Activated T-helper 2 cell treated with anti-CD3 and anti-CD28 coated beads, Interferon-gamma antibody, Interleukin-2, Interleukin-4, amounts not matched to agents 10 μg/mL and 5 μg/mL and 100 μg/mL, durations not matched to agents 14 hours and 24 hours and 36 hours (primary cell): ENCODE measurements at regions of chr2 and their contacts with region 1.

Region 1: DNA sequence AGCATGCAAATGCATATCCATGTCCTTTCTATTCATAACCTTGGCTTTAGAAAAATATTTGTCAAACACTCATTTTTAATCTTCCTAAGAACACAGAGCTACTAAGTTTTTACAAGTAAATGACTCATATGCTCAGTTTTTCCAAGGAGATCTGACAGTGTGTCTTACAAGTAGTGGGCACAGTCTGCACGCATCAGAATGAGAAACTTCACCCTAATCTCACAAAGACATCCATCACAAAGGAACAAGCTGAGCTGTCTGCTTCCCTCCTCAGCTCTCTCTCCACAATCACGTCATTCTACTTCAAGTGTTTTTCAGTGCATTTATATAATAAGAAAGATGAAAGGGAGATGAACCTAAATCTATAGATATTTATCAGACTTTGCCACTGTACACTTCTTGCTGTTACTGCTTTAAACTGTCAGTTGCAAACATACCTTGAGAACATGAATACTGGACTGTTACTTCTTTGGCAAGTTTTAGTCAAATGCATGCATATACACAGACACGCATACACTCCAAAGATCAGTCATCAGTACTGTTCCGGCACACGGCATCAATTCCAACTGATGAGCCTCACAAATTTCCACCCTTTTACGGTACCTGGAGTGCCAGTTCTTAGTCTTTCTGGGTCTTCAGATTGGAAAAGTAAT is 75.7 kb downstream of the RBMS1 start:
- DNase-seq: no peak
- H3K4me3 Mint-ChIP-seq: no peak overlapping the region
- H3K27ac Mint-ChIP-seq: peak overlapping the region; percentile 85
- H3K4me1 Mint-ChIP-seq: peaks cover 61% of the 10 kb centered on the region
- H3K27me3 Mint-ChIP-seq: no peaks in the 10 kb centered on the region

Region 2: DNA sequence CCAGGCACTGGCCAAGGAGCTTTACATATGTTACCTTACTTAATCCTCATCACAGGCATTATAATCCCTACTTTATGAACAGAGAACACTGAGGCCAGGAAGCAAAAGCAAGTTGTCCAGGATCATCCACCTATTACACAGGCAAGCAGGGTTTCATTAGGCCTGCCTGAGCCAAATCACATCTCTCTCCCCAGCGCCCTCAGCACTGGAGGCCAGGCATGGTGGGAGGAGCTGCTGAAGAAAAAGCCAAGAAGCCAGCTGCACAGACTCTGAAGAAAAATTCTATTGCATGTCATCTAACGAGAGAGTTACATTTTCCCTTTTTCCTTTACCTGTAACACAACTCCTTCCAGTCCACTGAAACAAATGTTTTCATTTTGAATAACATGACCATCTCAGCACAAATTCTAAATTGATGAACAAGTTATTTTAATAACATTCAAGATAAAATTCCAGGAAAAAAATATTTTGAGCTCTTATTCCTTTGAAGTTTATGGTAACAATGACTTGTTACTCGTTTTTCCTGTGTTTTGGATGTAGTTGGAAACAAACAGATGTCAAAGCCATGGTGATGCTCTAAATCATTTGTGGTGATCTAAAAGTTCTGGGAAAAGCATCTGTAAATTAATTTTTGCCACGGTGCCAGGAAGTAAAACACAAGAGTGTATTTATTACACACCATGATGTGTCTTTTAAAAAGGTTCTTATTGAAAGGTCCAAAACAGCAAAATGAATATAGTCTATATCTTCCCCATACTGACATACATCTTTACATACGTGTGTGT is 78.8 kb before region 1 on chr2:
- intact Hi-C with region 1: loop called (anchors 5 kb)
- DNase-seq: no peak
- H3K4me3 Mint-ChIP-seq: no peak overlapping the region
- H3K27ac Mint-ChIP-seq: no peak overlapping the region
- H3K4me1 Mint-ChIP-seq: peaks cover 34% of the 10 kb centered on the region
- H3K27me3 Mint-ChIP-seq: no peaks in the 10 kb centered on the region

Region 3: DNA sequence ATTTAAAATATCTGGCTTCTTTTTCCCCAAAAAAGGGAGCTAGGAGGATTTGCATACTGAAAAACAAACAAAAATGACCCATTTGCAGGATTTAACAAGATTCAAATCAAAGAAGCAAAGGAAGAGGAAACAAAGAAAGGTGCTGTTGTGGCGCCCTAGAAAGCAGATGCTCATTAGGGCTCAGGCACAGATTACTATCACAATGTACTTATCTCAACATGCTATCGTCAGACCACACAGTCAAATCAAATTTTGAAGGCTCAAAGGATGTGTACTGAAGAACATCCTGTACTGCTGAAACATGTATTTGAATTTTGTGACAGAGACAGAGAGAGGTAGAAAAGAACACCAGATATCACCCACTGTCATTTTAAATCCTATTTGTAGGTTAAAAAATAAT is 64.8 kb after region 1 on chr2:
- intact Hi-C with region 1: loop called (anchors 1 kb)
- DNase-seq: peak; percentile 41
- H3K4me3 Mint-ChIP-seq: no peak overlapping the region
- H3K27ac Mint-ChIP-seq: peak overlapping the region; percentile 63
- H3K4me1 Mint-ChIP-seq: peaks cover 55% of the 10 kb centered on the region
- H3K27me3 Mint-ChIP-seq: no peaks in the 10 kb centered on the region